ENCODE measurements at regions of chr6 and their contacts with region 1.

Region 1: DNA sequence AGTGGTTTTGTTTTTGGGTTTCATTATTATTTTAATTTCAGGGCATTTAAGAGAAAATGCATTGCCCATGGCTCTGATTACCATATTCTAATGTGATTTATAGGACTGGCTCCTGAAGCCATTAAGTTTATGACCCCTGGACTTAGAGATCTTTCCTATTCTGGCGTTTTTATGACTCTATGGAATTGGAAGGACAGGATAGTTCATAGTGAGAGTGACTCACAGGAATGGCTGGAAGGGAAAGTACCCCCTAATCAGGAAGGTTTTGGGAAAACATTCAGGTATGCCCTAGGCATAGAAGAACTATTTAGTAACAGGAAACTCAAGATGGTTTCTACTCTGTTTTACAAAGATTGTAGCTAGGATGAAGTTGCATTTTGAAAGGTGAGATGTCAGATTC is 108.6 kb upstream of the SLC2A12 start:
- DNase-seq: peak; percentile 46
- H3K4me3 Mint-ChIP-seq: no peak overlapping the region
- H3K27ac Mint-ChIP-seq: no peak overlapping the region
- H3K4me1 Mint-ChIP-seq: peaks cover 6% of the 10 kb centered on the region
- H3K27me3 Mint-ChIP-seq: no peaks in the 10 kb centered on the region
- CTCF ChIP-seq: no peak

Region 2: GRCh38 chr6:134814086-134814709 is 653.2 kb after region 1 on chr6:
- CTCF ChIA-PET with region 1: interaction called, 11 read pairs
- POLR2A ChIA-PET with region 1: no interaction called
- intact Hi-C with region 1: no loop called
- DNase-seq: peak; percentile 40
- H3K4me3 Mint-ChIP-seq: no peak overlapping the region
- H3K27ac Mint-ChIP-seq: no peak overlapping the region
- H3K4me1 Mint-ChIP-seq: no peaks in the 10 kb centered on the region
- H3K27me3 Mint-ChIP-seq: no peaks in the 10 kb centered on the region
- CTCF ChIP-seq: no peak

Region 3: GRCh38 chr6:134882426-134883038 is 721.5 kb after region 1 on chr6:
- CTCF ChIA-PET with region 1: interaction called, 19 read pairs
- POLR2A ChIA-PET with region 1: interaction called, 3 read pairs
- intact Hi-C with region 1: loop called (anchors 1 kb)
- DNase-seq: peak; percentile 82
- H3K4me3 Mint-ChIP-seq: no peak overlapping the region
- H3K27ac Mint-ChIP-seq: no peak overlapping the region
- H3K4me1 Mint-ChIP-seq: peaks cover 16% of the 10 kb centered on the region
- H3K27me3 Mint-ChIP-seq: no peaks in the 10 kb centered on the region
- CTCF ChIP-seq: peak; percentile 94

Region 4: GRCh38 chr6:134891633-134892032 is 730.6 kb after region 1 on chr6:
- CTCF ChIA-PET with region 1: interaction called, 11 read pairs
- POLR2A ChIA-PET with region 1: no interaction called
- intact Hi-C with region 1: no loop called
- DNase-seq: no peak
- H3K4me3 Mint-ChIP-seq: no peak overlapping the region
- H3K27ac Mint-ChIP-seq: no peak overlapping the region
- H3K4me1 Mint-ChIP-seq: peaks cover 5% of the 10 kb centered on the region
- H3K27me3 Mint-ChIP-seq: no peaks in the 10 kb centered on the region
- CTCF ChIP-seq: no peak